ENCODE measurements at regions of chr5 and their contacts with region 1.

Region 1: GRCh38 chr5:148314204-148314603 is 2.0 kb downstream of the SPINK7 start:
- DNase-seq: peak; percentile 53
- H3K4me3 Mint-ChIP-seq: no peak overlapping the region
- H3K27ac Mint-ChIP-seq: no peak overlapping the region
- H3K4me1 Mint-ChIP-seq: no peaks in the 10 kb centered on the region
- H3K27me3 Mint-ChIP-seq: no peaks in the 10 kb centered on the region
- CTCF ChIP-seq: peak; percentile 40

Region 2: GRCh38 chr5:148353634-148354033 is 39.4 kb after region 1 on chr5:
- CTCF ChIA-PET with region 1: no interaction called
- POLR2A ChIA-PET with region 1: no interaction called
- intact Hi-C with region 1: loop called (anchors 1 kb)
- DNase-seq: peak; percentile 14
- H3K4me3 Mint-ChIP-seq: no peak overlapping the region
- H3K27ac Mint-ChIP-seq: no peak overlapping the region
- H3K4me1 Mint-ChIP-seq: no peaks in the 10 kb centered on the region
- H3K27me3 Mint-ChIP-seq: no peaks in the 10 kb centered on the region
- CTCF ChIP-seq: peak; percentile 29